ENCODE measurements at regions of chr4 and their contacts with region 1.

Region 1: DNA sequence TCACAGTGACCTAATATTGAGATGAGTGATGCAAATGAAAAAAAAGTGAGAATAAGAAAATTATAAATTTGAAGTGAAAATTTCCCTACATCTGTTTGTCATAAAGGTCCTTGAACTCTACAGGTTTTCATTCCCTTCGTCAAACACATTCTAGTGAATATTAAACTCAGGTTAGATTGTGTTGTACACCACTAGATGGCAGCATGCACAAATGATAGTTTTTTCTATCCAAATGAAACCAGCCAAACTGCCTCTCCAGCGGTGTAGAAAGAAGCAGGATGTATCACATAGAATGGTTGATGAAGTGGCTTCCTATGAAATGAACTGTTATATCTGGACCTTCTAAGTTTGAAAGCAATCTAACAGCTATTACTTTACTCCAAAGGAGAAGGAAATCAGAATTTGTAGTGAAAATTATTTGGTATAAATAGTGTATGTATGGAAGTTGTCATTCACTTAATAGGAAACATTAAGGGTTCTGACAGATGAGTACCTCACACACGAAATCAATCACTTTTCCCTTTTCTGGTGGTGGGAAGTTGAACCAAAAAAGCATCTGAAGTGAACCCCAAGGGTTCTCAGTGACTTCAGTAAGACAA is 382.7 kb downstream of the UNC5C start:
- DNase-seq: peak in 7 of 9 donors; percentile 36 to 76 (median 64)
- ATAC-seq: peak; percentile 81
- H3K4me3 ChIP-seq: no peak overlapping the region
- H3K4me3 Mint-ChIP-seq: no peak overlapping the region
- H3K27ac ChIP-seq: no peak overlapping the region
- H3K27ac Mint-ChIP-seq: no peak overlapping the region
- H3K4me1 ChIP-seq: no peaks in the 10 kb centered on the region
- H3K4me1 Mint-ChIP-seq: peaks cover 0 to 6% (median 0%) of the 10 kb centered on the region in 7 donors
- H3K27me3 ChIP-seq: no peaks in the 10 kb centered on the region
- H3K27me3 Mint-ChIP-seq: peaks cover 0 to 11% (median 0%) of the 10 kb centered on the region in 5 donors

Region 2: DNA sequence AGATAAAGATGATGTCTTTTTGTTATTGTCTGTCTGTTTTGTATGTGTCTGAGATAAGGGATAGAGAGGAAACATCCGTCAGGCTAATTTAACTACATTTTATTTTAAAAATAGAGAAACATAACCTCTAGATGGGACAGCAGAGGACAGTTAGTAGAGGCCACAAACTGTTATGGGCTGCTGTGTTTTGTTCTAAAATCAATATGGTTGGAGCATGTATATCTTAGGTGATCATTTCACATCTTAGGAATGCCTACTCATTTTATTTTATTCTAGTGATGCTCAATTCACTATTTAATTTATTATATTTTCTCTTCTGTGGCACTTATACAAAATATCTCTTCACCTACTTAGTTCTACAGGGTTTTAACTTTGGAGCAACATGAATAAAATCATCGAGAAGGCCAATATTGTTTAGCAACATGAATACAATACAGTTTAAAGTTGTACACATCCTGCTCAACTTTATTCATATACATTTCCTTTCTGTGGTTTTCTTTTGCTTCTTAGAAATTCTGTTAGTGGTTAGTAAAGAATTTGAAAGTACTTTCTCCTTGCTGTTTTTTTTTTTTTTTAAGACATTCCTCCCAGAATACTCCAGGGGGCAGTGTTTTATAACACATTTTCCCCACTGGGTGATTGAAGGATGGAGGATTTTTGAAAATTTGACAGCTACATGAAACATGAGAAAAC is 10.1 kb before region 1 on chr4:
- CTCF ChIA-PET with region 1: interaction called, 5 read pairs
- POLR2A ChIA-PET with region 1: no interaction called
- intact Hi-C with region 1: loop called in 1 of 2 experiments (anchors 1 kb)
- DNase-seq: peak in 6 of 9 donors; percentile 50 to 72 (median 64)
- ATAC-seq: peak; percentile 78
- H3K4me3 ChIP-seq: no peak overlapping the region
- H3K4me3 Mint-ChIP-seq: peak overlapping the region in 9 of 10 donors; percentile 13 to 79 (median 75)
- H3K27ac ChIP-seq: no peak overlapping the region
- H3K27ac Mint-ChIP-seq: peak overlapping the region; percentile 33 to 93 (median 71)
- H3K4me1 ChIP-seq: peaks cover 4 to 11% of the 10 kb centered on the region in 2 donors
- H3K4me1 Mint-ChIP-seq: peaks cover 12 to 36% (median 16%) of the 10 kb centered on the region in 7 donors
- H3K27me3 ChIP-seq: no peaks in the 10 kb centered on the region
- H3K27me3 Mint-ChIP-seq: peaks cover 0 to 41% (median 0%) of the 10 kb centered on the region in 5 donors

Region 3: DNA sequence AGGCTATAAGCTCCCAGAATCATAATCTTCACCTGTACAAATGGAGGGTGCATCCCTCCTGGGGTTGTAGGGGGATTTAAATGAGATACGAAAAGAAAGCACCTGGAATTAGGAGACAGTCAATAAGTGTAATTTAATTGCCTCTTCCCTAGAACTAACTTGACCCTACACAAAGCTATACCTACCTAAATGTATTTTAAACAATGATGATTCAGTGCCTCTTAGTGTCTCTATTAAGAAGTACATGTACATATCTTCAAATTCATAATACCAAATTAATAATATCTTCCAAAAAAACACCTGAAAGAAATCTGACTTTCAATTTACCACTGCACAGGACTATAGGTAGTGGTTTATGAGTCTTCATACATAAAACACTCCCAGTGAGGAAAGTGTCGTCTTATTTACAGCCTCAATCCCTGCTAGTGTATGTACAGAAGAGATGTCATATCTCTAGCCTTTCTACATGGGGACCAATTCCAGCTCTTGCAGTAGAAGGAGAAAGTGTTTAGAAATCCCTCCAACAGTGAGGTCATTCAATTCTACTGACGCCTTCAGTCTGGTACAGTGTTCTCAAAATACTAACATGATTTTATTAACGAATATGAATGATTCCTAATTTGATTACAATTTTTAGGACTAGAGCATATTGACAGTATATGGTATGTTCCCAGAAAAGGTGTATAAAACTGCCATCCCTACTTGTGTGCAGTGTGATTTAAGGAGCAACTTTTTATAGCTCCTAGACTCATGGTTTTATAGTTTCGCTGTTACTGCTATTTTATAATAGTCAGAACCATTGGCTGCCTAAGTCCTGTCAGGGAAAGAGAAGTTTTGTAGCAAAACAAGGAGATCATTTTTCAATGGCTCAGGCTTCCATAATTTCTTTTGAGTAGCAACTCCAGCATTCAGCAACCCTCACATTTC is 100.1 kb after region 1 on chr4:
- CTCF ChIA-PET with region 1: no interaction called
- POLR2A ChIA-PET with region 1: no interaction called
- intact Hi-C with region 1: loop called in 1 of 2 experiments (anchors 1 kb)
- DNase-seq: no peak
- ATAC-seq: no peak
- H3K4me3 ChIP-seq: no peak overlapping the region
- H3K4me3 Mint-ChIP-seq: no peak overlapping the region
- H3K27ac ChIP-seq: no peak overlapping the region
- H3K27ac Mint-ChIP-seq: no peak overlapping the region
- H3K4me1 ChIP-seq: no peaks in the 10 kb centered on the region
- H3K4me1 Mint-ChIP-seq: no peaks in the 10 kb centered on the region
- H3K27me3 ChIP-seq: no peaks in the 10 kb centered on the region
- H3K27me3 Mint-ChIP-seq: no peaks in the 10 kb centered on the region

Region 4: GRCh38 chr4:95510145-95510544 is 344.1 kb after region 1 on chr4:
- CTCF ChIA-PET with region 1: no interaction called
- POLR2A ChIA-PET with region 1: no interaction called
- intact Hi-C with region 1: loop called (anchors 2 to 5 kb)
- DNase-seq: peak in 1 of 9 donors; percentile 1
- ATAC-seq: no peak
- H3K4me3 ChIP-seq: no peak overlapping the region
- H3K4me3 Mint-ChIP-seq: no peak overlapping the region
- H3K27ac ChIP-seq: no peak overlapping the region
- H3K27ac Mint-ChIP-seq: no peak overlapping the region
- H3K4me1 ChIP-seq: no peaks in the 10 kb centered on the region
- H3K4me1 Mint-ChIP-seq: no peaks in the 10 kb centered on the region
- H3K27me3 ChIP-seq: no peaks in the 10 kb centered on the region
- H3K27me3 Mint-ChIP-seq: peaks cover 0 to 10% (median 3%) of the 10 kb centered on the region in 5 donors

Region 5: DNA sequence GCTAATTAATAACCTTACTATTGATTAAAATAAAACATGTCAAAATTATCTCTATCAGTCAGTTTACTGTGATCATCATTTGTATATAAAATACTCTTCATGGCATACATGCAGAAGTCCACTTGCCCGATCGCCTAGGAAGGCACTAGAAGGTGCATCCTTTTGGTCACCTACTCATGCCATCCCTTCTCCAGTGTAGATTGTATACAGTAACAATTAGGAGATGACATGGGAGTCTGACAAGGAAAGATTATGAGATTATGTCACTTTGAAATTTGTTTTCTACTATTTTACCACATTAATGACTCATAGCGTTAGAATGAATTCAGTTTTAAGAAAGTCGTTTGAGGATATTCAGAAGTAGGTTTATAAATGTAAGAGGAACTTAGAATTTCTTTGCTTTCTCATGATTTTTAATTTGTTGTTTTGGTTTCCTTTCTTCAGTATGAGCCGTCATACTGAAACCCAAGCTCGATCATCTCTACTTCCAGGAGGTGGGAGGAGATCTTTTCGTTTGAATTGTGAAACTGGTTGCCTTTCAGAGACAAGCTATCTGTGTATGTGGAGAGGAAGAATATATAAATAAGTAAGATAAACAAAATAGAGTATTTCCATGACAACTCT is 433.9 kb after region 1 on chr4:
- CTCF ChIA-PET with region 1: no interaction called
- POLR2A ChIA-PET with region 1: no interaction called
- intact Hi-C with region 1: no loop called
- DNase-seq: no peak
- ATAC-seq: no peak
- H3K4me3 ChIP-seq: no peak overlapping the region
- H3K4me3 Mint-ChIP-seq: peak overlapping the region in 1 of 10 donors; percentile 18
- H3K27ac ChIP-seq: no peak overlapping the region
- H3K27ac Mint-ChIP-seq: no peak overlapping the region
- H3K4me1 ChIP-seq: no peaks in the 10 kb centered on the region
- H3K4me1 Mint-ChIP-seq: peaks cover 0 to 10% (median 0%) of the 10 kb centered on the region in 7 donors
- H3K27me3 ChIP-seq: no peaks in the 10 kb centered on the region
- H3K27me3 Mint-ChIP-seq: peaks cover 0 to 21% (median 0%) of the 10 kb centered on the region in 5 donors

Region 6: GRCh38 chr4:96352051-96352517 is 1186.1 kb after region 1 on chr4:
- CTCF ChIA-PET with region 1: no interaction called
- POLR2A ChIA-PET with region 1: no interaction called
- intact Hi-C with region 1: loop called in 1 of 2 experiments (anchors 1 kb)
- DNase-seq: no peak
- ATAC-seq: no peak
- H3K4me3 ChIP-seq: no peak overlapping the region
- H3K4me3 Mint-ChIP-seq: no peak overlapping the region
- H3K27ac ChIP-seq: no peak overlapping the region
- H3K27ac Mint-ChIP-seq: no peak overlapping the region
- H3K4me1 ChIP-seq: no peaks in the 10 kb centered on the region
- H3K4me1 Mint-ChIP-seq: peaks cover 0 to 8% (median 0%) of the 10 kb centered on the region in 7 donors
- H3K27me3 ChIP-seq: no peaks in the 10 kb centered on the region
- H3K27me3 Mint-ChIP-seq: no peaks in the 10 kb centered on the region